GM12878 (cell line): ENCODE measurements at regions of chr20 and their contacts with region 1.

Region 1: DNA sequence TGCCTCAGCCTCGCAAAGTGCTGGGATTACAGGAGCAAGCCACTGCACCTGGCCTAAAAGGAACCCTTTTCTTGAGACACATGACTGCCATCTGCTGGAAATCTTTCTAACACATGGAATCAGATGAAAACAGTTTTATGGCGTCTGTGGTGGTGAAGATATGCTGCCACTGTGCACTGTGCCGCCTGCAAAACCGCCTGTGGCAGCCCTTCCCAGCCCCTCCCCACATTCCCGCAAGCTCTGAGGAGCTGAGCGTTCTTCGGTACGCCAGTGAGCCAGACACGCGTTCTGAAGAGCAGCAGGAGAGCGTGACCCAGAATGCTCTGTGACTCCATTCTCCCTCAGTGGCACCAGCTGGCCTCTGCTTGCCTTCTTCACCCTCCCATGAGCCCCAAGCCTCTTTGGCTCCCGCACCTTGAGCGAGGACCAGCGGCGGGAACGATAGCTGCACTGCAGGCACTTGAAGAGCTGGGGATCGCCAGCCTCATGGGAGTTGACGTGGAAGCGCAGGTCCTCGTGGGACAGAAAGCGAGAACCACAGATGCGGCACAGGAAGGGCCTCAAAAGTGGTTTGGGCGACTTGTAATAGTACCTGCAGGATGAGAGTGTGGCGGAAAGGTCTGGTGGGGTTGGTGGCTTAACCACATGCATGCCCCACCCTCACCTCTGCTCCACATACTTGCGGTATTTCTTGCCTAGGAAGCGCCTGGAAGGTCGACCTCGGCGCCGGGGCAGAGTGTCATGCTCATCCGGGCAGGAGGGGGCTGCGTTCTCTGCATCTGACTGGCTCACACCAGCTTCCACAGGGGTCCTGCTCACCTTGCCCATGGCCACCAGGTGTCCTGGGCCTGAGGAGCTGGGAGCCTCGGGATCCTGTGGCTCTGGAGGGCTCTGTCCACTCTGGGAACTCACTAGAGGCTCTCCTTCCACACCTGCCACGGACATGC is 8.7 kb downstream of the ZNF335 start:
- DNase-seq: no peak
- ATAC-seq: peak; percentile 43; the same call in 2 of the 3 replicates
- H3K4me3 ChIP-seq: no peak overlapping the region
- H3K27ac ChIP-seq: no peak overlapping the region
- H3K4me1 ChIP-seq: peaks cover 18% of the 10 kb centered on the region
- H3K27me3 ChIP-seq: no peaks in the 10 kb centered on the region
- CTCF ChIP-seq: peak in 2 of 3 experiments; percentile 31 to 51; a peak in 3 of 6 replicates
- EP300 ChIP-seq: no peak
- POLR2A ChIP-seq: no peak; the same call in 1 of the 2 replicates
- RAD21 ChIP-seq: peak; percentile 53

Region 2: DNA sequence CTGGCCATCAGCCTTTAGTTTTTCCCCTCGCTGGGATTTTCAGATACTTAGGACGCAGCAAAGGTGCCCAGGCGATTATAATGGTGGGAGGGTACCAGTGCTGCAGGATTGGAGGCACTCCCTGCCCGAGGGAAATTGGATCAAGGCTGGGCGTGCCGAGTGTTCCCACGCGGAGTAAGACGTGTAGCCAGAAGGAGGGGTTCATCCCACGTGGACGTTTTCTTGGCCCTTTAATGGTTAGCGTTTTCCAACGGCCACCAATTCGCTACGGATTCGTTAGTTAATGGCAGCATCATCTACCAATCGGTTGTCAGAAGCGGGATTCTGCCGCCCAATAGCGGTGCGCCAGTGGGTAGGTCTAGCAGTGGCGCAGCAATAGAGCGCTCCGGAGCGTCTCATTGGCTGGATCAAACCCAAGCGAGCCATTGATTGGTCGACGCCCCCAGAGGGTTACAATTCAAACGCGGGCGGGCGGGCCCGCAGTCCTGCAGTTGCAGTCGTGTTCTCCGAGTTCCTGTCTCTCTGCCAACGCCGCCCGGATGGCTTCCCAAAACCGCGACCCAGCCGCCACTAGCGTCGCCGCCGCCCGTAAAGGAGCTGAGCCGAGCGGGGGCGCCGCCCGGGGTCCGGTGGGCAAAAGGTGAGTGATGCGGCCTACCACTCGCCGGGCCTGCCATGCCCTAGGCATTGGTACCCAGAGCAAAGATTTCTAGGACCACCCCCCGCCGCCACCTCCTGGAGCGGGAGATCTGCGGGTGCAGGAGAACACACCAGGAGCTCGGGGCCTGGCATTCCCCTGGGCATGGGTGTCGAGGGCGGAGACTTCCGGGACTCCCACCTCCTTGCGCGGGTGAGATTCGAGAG is 150.9 kb before region 1 on chr20 and contains the start of gene UBE2C:
- CTCF ChIA-PET with region 1: interaction called, 9 read pairs
- POLR2A ChIA-PET with region 1: no interaction called
- RAD21 ChIA-PET with region 1: interaction called, 4 read pairs
- SMC1A ChIA-PET with region 1: interaction called, 3 read pairs
- in situ Hi-C with region 1: no loop called
- intact Hi-C with region 1: loop called (anchors 5 kb)
- DNase-seq: peak; percentile 98
- ATAC-seq: peak; percentile 100
- H3K4me3 ChIP-seq: peak within 1 kb of the TSS; percentile 85
- H3K27ac ChIP-seq: peak within 1 kb of the TSS; percentile 93
- H3K4me1 ChIP-seq: no peaks in the 10 kb centered on the region
- H3K27me3 ChIP-seq: no peaks in the 10 kb centered on the region
- CTCF ChIP-seq: no peak
- EP300 ChIP-seq: no peak
- POLR2A ChIP-seq: peak; percentile 88
- RAD21 ChIP-seq: no peak
- polyA plus RNA-seq, gene UBE2C: 86.2 to 140 TPM

Region 3: GRCh38 chr20:45880988-45881788 is 82.1 kb before region 1 on chr20 and contains the start of gene ZSWIM1:
- CTCF ChIA-PET with region 1: interaction called, 3 read pairs
- POLR2A ChIA-PET with region 1: interaction called, 3 read pairs
- RAD21 ChIA-PET with region 1: no interaction called
- SMC1A ChIA-PET with region 1: interaction called, 10 read pairs
- in situ Hi-C with region 1: no loop called
- intact Hi-C with region 1: no loop called
- DNase-seq: peak; percentile 99
- ATAC-seq: peak; percentile 100
- H3K4me3 ChIP-seq: peak within 1 kb of the TSS; percentile 84
- H3K27ac ChIP-seq: peak within 1 kb of the TSS; percentile 73
- H3K4me1 ChIP-seq: peaks cover 12% of the 10 kb centered on the region
- H3K27me3 ChIP-seq: no peaks in the 10 kb centered on the region
- CTCF ChIP-seq: no peak
- EP300 ChIP-seq: no peak
- POLR2A ChIP-seq: peak; percentile 98
- RAD21 ChIP-seq: no peak
- polyA plus RNA-seq, gene ZSWIM1: 2.4 to 2.5 TPM

Region 4: GRCh38 chr20:45946149-45946970 is 17.0 kb before region 1 on chr20:
- CTCF ChIA-PET with region 1: interaction called, 33 read pairs
- POLR2A ChIA-PET with region 1: interaction called, 13 read pairs
- RAD21 ChIA-PET with region 1: interaction called, 5 read pairs
- SMC1A ChIA-PET with region 1: interaction called, 3 read pairs
- in situ Hi-C with region 1: no loop called
- intact Hi-C with region 1: no loop called
- DNase-seq: no peak
- ATAC-seq: peak; percentile 7; the same call in 2 of the 3 replicates
- H3K4me3 ChIP-seq: no peak overlapping the region
- H3K27ac ChIP-seq: no peak overlapping the region
- H3K4me1 ChIP-seq: peaks cover 3% of the 10 kb centered on the region; the same call in 1 of the 2 replicates
- H3K27me3 ChIP-seq: no peaks in the 10 kb centered on the region
- CTCF ChIP-seq: no peak
- EP300 ChIP-seq: no peak
- POLR2A ChIP-seq: peak; percentile 39
- RAD21 ChIP-seq: no peak